Activated T-helper 2 cell treated with anti-CD3 and anti-CD28 coated beads, Interferon-gamma antibody, Interleukin-2, Interleukin-4, amounts not matched to agents 10 μg/mL and 5 μg/mL and 100 μg/mL, durations not matched to agents 14 hours and 24 hours and 36 hours (primary cell): ENCODE measurements at regions of chr12 and their contacts with region 1.

Region 1: DNA sequence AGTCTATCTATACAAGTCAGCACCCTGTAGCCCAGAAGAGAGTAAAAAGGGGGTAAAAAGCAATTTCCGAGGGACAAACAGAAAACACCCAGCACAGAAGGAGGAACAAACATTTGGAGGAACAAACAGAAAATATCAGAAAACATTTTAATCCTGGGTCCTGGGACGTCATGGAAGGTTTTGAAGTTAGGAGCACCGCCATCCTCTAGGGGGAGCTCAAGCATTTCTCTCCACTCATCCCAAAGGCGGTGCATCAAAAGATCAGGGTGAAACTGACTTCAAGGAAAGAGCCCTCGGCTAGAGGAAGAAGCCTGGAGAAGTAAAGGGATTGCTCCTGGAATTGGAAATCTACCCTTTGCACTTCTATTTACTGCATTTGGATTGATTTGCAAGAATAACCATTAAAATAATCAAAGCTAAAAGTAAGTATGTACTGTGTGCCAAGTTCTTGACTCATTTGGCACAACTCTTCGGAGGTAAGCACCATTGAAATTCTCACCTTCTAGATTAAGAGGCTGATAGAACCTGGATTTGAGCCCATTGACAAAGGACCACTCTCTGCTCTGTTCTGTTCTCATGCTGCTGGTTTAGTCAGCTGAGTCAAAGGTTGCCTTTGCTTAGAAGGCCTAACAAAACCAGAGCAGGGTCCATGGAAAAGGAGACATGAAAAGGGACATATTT is 17.2 kb upstream of the POC1B start:
- DNase-seq: peak; percentile 35
- H3K4me3 Mint-ChIP-seq: no peak overlapping the region
- H3K27ac Mint-ChIP-seq: no peak overlapping the region
- H3K4me1 Mint-ChIP-seq: peaks cover 9% of the 10 kb centered on the region
- H3K27me3 Mint-ChIP-seq: no peaks in the 10 kb centered on the region

Region 2: GRCh38 chr12:89514751-89515150 is 28.3 kb before region 1 on chr12:
- intact Hi-C with region 1: no loop called
- DNase-seq: no peak
- H3K4me3 Mint-ChIP-seq: no peak overlapping the region
- H3K27ac Mint-ChIP-seq: no peak overlapping the region
- H3K4me1 Mint-ChIP-seq: peaks cover 10% of the 10 kb centered on the region
- H3K27me3 Mint-ChIP-seq: no peaks in the 10 kb centered on the region

Region 3: DNA sequence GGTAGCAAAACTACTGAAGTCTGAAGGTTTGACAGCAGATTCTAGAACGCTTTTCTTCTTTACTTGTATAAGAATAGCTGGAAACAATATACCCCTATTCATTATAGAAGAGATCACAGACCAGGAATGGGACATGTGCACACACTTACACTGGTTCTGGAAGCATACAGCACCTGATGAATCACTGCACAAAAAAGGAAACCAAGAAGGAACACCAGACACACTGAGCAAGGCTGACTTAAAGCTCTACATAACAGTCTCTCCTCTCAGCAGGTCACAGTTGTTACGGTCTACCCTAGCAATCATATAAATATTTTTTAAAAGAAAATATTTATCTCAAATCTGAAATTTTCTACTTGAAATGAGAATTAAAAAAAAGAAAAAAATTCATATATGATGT is 152.0 kb after region 1 on chr12:
- intact Hi-C with region 1: no loop called
- DNase-seq: no peak
- H3K4me3 Mint-ChIP-seq: no peak overlapping the region
- H3K27ac Mint-ChIP-seq: no peak overlapping the region
- H3K4me1 Mint-ChIP-seq: peaks cover 10% of the 10 kb centered on the region
- H3K27me3 Mint-ChIP-seq: no peaks in the 10 kb centered on the region

Region 4: GRCh38 chr12:90013409-90013808 is 470.4 kb after region 1 on chr12:
- intact Hi-C with region 1: loop called (anchors 10 kb)
- DNase-seq: no peak
- H3K4me3 Mint-ChIP-seq: no peak overlapping the region
- H3K27ac Mint-ChIP-seq: no peak overlapping the region
- H3K4me1 Mint-ChIP-seq: no peaks in the 10 kb centered on the region
- H3K27me3 Mint-ChIP-seq: peaks cover 21% of the 10 kb centered on the region

Region 5: DNA sequence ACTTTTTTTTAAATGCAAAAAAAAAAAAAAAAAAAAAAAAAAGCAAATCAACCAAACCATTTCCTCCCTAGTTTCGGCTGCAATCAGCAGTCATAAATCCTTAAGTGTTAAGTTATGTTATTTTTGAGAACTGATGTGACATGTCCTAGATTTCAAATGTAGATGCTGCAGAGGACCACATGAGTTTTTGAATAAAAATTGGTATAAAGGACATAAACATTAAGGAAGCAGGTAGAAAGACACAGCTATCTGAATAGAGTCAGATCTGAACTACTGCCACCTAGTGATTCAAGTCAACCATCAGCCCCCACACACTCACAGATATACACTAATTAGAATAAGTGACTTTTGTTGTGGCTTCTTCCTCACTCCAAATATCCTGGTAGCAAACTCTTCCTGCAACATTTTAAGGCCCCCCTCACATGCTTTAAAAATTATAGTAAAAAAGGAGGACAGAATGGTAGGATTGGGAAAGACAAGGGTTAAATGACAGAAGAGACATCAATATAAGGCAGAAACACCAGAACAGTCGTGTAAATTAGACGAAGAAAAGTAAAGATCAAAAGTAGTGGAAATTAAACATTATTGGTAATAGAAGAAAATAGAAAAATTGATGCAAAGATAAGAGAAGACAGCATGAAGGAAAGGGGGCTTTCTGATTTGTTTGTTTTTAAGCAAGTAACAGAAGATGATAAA is 560.1 kb after region 1 on chr12:
- intact Hi-C with region 1: loop called (anchors 1 kb)
- DNase-seq: no peak
- H3K4me3 Mint-ChIP-seq: no peak overlapping the region
- H3K27ac Mint-ChIP-seq: no peak overlapping the region
- H3K4me1 Mint-ChIP-seq: peaks cover 9% of the 10 kb centered on the region
- H3K27me3 Mint-ChIP-seq: peaks cover 18% of the 10 kb centered on the region

Region 6: DNA sequence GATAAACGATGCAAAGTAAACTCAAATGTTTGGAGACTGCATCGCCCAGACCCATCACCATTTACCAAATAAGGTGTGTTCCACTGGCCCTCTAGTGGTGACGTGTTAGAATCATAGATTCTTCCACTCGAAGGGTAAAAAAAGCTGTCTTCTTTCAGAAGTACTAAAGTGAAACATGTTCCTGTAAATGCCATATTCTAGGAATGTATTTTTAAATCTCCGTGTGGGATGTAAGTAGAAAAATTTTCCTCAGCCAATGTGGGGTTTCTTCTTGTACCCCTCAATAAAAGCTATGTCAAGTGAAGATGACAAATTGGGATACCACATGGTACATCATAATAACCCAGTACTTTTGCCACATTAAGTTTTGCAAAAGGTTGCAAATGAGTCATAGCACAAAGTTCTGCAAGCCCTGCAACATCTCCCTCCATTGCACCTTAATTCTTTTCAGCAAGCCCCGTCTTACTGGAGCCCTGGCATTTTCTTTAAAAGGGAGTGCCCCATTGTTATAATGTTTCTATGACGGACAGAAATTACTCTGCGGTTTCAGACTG is 1311.2 kb after region 1 on chr12:
- intact Hi-C with region 1: loop called (anchors 10 kb)
- DNase-seq: no peak
- H3K4me3 Mint-ChIP-seq: no peak overlapping the region
- H3K27ac Mint-ChIP-seq: no peak overlapping the region
- H3K4me1 Mint-ChIP-seq: no peaks in the 10 kb centered on the region
- H3K27me3 Mint-ChIP-seq: no peaks in the 10 kb centered on the region